GM10248 (cell line): ENCODE measurements at regions of chr1 and their contacts with region 1.

Region 1: DNA sequence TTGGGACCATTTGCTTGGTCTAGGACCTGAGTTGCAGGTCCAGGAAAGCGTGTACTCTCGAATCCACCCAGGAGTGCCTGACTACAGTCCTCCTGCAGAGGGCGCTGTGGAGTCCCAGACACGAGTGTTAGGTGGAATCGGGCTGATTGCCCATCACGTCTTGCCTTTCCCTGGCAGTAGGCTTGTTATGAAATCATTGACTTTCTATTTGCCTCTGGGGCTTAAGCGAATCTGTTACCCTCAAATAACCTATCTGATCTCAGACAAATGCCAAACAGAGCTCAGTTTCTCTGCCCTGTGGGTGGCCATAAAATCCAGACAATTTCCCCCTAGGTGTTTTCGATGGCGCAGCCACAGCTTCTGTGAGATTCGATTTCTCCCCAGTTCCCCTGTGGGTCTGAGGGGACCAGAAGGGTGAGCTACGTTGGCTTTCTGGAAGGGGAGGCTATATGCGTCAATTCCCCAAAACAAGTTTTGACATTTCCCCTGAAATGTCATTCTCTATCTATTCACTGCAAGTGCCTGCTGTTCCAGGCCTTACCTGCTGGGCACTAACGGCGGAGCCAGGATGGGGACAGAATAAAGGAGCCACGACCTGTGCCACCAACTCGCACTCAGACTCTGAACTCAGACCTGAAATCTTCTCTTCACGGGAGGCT is at the start of gene IL20:
- DNase-seq: peak; percentile 69
- CTCF ChIP-seq: peak; percentile 91

Region 2: DNA sequence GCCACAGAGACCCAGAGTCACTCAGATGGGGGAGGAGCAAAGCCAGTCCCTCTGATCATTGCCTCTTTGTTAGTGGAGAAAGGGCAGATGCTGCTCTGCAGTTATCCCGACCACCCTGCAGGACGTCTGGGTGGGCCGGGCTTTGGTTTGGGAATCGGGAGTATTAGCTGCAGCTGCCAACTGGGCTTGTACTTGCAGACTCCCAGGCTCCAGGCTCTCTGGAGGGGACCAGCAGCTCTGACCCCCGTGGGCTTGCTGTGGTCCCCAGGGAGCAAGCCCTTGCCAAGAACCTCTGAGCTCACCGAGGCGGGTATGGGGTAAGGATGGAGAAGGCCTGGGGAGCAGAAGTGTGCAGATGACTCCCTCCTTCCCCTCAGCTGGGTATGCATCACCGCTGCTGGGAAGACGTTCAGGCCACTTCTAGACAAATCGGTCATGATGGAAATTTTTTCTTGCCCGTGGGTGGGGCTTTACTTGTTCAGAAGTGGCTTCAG is 158.8 kb before region 1 on chr1:
- CTCF ChIA-PET with region 1: no interaction called
- POLR2A ChIA-PET with region 1: no interaction called
- DNase-seq: no peak
- CTCF ChIP-seq: no peak

Region 3: DNA sequence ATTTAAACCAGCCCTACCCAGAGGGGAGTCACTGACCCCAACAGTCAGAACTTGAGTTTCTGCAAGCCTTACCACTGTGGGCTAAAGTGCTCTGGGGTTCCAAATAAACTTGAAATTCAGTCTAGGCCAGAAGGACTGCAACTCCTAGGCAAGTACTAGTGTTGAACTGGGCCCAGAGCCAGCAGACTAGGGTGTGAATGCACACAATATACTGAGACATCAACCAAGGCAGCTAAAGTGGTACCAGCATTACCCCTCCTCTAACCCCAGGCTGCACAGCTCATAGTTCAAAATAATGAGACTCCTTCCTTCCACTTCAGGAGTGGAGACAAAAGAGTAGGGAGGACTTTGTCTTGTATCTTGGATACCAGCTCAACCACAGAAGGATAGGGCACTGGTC is 18.7 kb before region 1 on chr1:
- CTCF ChIA-PET with region 1: interaction called, 12 read pairs
- POLR2A ChIA-PET with region 1: no interaction called
- DNase-seq: no peak
- CTCF ChIP-seq: no peak

Region 4: GRCh38 chr1:206885341-206886060 is 20.4 kb after region 1 on chr1:
- CTCF ChIA-PET with region 1: interaction called, 21 read pairs
- POLR2A ChIA-PET with region 1: no interaction called
- DNase-seq: no peak
- CTCF ChIP-seq: no peak

Region 5: GRCh38 chr1:206918076-206918475 is 52.9 kb after region 1 on chr1:
- CTCF ChIA-PET with region 1: interaction called, 24 read pairs
- POLR2A ChIA-PET with region 1: no interaction called
- DNase-seq: no peak
- CTCF ChIP-seq: no peak

Region 6: DNA sequence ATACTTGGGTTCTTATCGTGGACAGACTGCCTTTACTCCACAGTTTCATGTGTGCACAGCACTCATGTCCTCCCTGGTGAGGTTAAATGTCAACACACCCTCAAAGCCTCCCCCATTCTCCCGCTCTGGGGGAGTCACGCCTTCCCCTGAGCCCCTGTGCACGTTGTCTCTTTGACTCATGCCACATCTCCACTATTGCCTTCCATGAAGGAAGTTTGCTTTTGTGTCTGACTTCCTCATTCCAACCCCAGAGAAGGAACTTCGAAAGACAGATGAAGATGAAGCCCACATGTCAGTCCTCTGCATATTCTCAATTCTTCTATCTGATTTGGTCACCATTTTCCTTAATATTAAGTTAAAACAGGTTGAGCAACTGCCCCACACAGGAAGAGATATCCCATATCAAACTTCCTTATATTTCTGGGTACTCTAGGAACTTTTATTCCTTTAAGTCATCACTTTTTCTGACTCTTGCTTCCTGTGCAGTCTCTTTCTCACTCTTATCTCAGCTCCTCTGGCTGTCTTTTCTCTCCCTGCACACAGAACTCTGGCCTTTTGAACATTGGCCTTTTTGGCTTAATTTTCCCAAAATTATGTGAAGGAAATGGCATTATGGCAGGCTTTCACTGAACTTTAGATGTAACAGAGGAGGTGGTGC is 280.4 kb after region 1 on chr1:
- CTCF ChIA-PET with region 1: no interaction called
- POLR2A ChIA-PET with region 1: no interaction called
- DNase-seq: no peak
- CTCF ChIP-seq: no peak

Region 7: DNA sequence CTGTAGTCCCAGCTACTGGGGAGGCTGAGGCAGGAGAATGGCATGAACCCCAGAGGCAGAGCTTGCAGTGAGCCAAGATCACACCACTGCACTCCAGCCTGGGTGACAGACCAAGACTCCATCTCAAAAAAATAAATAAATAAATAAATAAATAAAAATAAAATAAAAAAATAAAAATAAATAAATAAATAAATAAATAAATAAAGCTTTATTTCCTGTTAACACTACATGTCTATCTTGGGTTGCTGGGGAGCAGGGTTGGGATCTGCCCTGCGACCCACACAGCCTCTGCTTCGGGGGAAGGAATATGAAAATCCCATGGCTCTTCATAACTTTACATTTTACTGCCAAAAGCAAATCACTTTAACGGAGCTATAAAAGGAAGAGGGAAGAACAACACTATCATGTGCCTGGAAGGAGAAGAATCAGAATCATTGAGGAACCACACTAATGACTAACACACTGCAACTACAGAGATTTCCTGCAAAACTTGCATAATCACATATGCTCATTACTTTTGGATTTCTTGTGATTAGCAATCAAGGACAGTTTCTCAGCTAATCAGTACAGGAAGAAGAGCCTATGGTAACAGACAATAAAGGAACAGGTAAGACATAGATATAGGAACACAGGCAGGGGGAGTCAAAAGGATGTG is 383.5 kb after region 1 on chr1:
- CTCF ChIA-PET with region 1: no interaction called
- POLR2A ChIA-PET with region 1: no interaction called
- DNase-seq: no peak
- CTCF ChIP-seq: no peak